ENCODE measurements at regions of chr4 and their contacts with region 1.

Region 1: GRCh38 chr4:182143822-182144625 is 99.2 kb upstream of the TENM3 start:
- DNase-seq: peak; percentile 77
- H3K4me3 Mint-ChIP-seq: peak overlapping the region; percentile 98
- H3K27ac Mint-ChIP-seq: peak overlapping the region; percentile 99
- H3K4me1 Mint-ChIP-seq: peaks cover 16% of the 10 kb centered on the region
- H3K27me3 Mint-ChIP-seq: no peaks in the 10 kb centered on the region
- CTCF ChIP-seq: no peak

Region 2: GRCh38 chr4:181939199-181939945 is 204.7 kb before region 1 on chr4:
- CTCF ChIA-PET with region 1: no interaction called
- POLR2A ChIA-PET with region 1: no interaction called
- intact Hi-C with region 1: loop called (anchors 1 kb)
- DNase-seq: peak; percentile 24
- H3K4me3 Mint-ChIP-seq: no peak overlapping the region
- H3K27ac Mint-ChIP-seq: peak overlapping the region; percentile 43
- H3K4me1 Mint-ChIP-seq: peaks cover 6% of the 10 kb centered on the region
- H3K27me3 Mint-ChIP-seq: no peaks in the 10 kb centered on the region
- CTCF ChIP-seq: peak; percentile 24

Region 3: GRCh38 chr4:182207830-182208396 is 63.9 kb after region 1 on chr4:
- CTCF ChIA-PET with region 1: interaction called, 3 read pairs
- POLR2A ChIA-PET with region 1: interaction called, 4 read pairs
- intact Hi-C with region 1: loop called (anchors 5 kb)
- DNase-seq: peak; percentile 87
- H3K4me3 Mint-ChIP-seq: peak overlapping the region; percentile 51
- H3K27ac Mint-ChIP-seq: peak overlapping the region; percentile 96
- H3K4me1 Mint-ChIP-seq: peaks cover 40% of the 10 kb centered on the region
- H3K27me3 Mint-ChIP-seq: no peaks in the 10 kb centered on the region
- CTCF ChIP-seq: no peak

Region 4: GRCh38 chr4:182307746-182308145 is 163.7 kb after region 1 on chr4:
- CTCF ChIA-PET with region 1: no interaction called
- POLR2A ChIA-PET with region 1: interaction called, 3 read pairs
- intact Hi-C with region 1: loop called (anchors 2 kb)
- DNase-seq: peak; percentile 97
- H3K4me3 Mint-ChIP-seq: peak overlapping the region; percentile 31
- H3K27ac Mint-ChIP-seq: peak overlapping the region; percentile 90
- H3K4me1 Mint-ChIP-seq: peaks cover 22% of the 10 kb centered on the region
- H3K27me3 Mint-ChIP-seq: no peaks in the 10 kb centered on the region
- CTCF ChIP-seq: no peak

Region 5: GRCh38 chr4:182806259-182807252 is 662.5 kb after region 1 on chr4:
- CTCF ChIA-PET with region 1: interaction called, 4 read pairs
- POLR2A ChIA-PET with region 1: no interaction called
- intact Hi-C with region 1: loop called (anchors 2 kb)
- DNase-seq: peak; percentile 62
- H3K4me3 Mint-ChIP-seq: no peak overlapping the region
- H3K27ac Mint-ChIP-seq: no peak overlapping the region
- H3K4me1 Mint-ChIP-seq: no peaks in the 10 kb centered on the region
- H3K27me3 Mint-ChIP-seq: no peaks in the 10 kb centered on the region
- CTCF ChIP-seq: peak; percentile 88